SK-N-SH (cell line): ENCODE measurements at regions of chr3 and their contacts with region 1.

Region 1: GRCh38 chr3:186540221-186540834 is 3.9 kb downstream of the CRYGS start:
- DNase-seq: peak; percentile 49
- H3K4me3 ChIP-seq: peak overlapping the region in 1 of 2 experiments; percentile 31; a peak in 2 of 4 replicates
- H3K27ac ChIP-seq: peak overlapping the region in 1 of 2 experiments; percentile 85; a peak in 2 of 4 replicates
- H3K4me1 ChIP-seq: peaks cover 12 to 20% of the 10 kb centered on the region in 2 experiments
- H3K27me3 ChIP-seq: no peaks in the 10 kb centered on the region
- CTCF ChIP-seq: peak; percentile 88
- EP300 ChIP-seq: no peak
- RAD21 ChIP-seq: peak; percentile 94

Region 2: DNA sequence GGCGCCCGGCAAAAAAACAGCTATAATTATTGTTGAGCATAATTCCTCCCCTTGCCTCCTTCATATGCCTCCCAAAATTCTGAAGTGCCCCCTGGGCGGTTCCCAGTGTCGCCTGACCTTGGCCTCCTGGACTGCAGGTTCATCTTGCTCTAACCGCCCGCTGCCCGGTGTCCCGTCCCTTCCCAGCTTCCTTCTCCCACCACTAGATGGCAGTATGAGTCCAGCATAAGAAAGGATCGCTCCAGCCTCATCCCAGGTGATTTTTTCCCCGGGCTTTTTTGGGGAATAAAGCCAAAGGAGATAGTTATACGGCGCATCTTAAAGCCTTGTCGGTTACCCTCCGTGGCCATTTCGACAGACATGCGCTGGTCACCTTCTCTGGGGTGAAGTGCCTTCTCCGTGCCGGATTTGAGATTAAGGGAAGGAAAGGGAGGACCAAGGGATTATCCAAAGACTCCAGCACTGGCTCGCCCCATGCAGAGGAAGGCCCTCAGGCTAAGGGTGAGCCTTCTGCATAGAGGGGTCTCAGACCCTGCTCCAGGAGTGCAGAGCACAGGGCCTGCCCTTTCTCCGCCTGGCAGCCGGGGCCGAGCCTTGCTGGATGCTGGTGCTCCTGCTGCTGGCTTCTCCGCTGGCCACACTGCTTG is 556.7 kb before region 1 on chr3:
- CTCF ChIA-PET with region 1: interaction called, 70 read pairs
- POLR2A ChIA-PET with region 1: no interaction called
- DNase-seq: peak; percentile 83
- H3K4me3 ChIP-seq: peak overlapping the region in 1 of 2 experiments; percentile 21; a peak in 1 of 4 replicates
- H3K27ac ChIP-seq: no peak overlapping the region
- H3K4me1 ChIP-seq: peaks cover 0 to 3% of the 10 kb centered on the region in 2 experiments; a peak in 1 of 4 replicates
- H3K27me3 ChIP-seq: no peaks in the 10 kb centered on the region
- CTCF ChIP-seq: peak; percentile 90
- EP300 ChIP-seq: no peak
- RAD21 ChIP-seq: peak; percentile 98

Region 3: DNA sequence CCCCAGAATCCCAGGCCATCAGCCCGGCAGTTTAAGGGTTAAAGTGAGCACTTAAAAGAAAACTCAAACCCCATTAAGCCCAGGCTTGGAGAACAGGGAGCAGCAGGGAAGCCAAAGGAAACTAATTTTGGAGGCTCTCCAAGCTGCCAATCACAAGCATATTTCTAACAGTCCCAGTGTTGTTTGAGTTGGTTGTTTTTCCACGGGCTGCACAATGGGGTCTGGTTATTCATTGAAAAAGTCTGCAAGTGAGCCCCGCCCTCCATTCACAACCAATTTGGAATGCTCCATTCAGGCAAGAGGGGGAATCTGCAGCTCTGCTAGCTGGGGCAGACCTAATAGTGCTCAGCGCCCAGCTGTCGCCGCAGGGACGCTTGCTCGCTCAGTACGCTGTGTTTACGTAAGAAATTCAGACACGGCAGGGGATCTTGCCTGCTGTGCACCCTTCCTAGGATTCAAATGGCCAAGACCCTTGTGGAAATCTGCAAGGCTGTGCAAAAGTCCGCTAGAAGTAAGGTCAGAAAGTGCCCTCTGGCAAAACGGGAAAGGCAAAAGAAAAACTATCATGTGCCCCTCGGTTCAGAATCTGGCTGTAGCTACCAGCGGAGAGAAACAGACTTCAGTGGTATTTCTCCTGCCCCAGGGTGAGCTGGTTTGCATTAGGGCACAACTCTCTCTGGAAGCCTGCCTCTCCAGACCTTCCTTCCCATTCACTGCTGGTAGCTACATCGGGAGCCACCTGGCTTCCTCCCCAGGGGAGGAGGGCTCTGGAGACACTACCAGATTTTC is 442.5 kb before region 1 on chr3:
- CTCF ChIA-PET with region 1: interaction called, 12 read pairs
- POLR2A ChIA-PET with region 1: interaction called, 3 read pairs
- DNase-seq: peak; percentile 84
- H3K4me3 ChIP-seq: peak overlapping the region; percentile 42 to 59
- H3K27ac ChIP-seq: peak overlapping the region; percentile 57 to 98
- H3K4me1 ChIP-seq: peaks cover 35 to 40% of the 10 kb centered on the region in 2 experiments
- H3K27me3 ChIP-seq: no peaks in the 10 kb centered on the region
- CTCF ChIP-seq: no peak
- EP300 ChIP-seq: peak in 1 of 2 experiments; percentile 8; a peak in 1 of 4 replicates
- RAD21 ChIP-seq: no peak

Region 4: DNA sequence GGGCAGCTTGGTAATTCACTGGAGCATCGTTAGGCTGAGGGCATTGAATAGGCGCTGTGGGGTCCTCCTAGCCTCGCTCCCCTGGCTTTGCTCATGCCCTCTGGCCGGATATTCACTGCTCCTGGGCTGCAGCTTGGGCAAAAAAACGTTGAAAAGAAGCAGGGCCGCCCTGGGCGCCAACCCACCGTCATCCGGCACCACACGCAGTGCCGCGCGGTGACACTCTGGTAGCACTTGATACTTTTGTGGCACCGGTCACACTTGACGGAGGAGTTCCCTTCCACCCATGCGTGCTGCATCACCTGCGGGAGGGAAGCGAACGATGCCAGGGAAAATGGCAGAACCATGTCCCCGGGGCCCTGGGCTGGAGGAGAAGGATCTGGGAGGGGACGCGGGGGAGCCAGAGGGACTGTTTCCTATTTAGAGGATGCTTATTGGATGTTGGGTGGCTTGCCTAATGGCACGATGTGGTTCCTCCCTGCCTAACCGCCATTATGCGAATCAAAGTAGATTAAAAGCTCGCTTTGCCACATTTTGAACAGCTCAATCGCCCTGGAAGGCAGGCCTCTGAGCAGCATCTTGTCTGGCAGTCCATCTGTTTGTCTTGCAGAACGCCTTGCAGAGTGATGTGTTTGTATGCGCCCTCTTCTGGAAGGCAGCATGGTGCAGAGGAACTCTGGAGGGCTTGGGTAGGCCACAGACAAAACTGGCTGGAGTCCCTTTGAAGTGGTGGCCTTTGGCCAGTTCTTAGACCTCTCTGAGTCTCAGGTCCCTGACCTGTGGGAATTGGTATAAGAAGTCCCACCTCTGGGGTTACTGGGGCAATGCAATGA is 271.5 kb before region 1 on chr3:
- CTCF ChIA-PET with region 1: interaction called, 13 read pairs
- POLR2A ChIA-PET with region 1: no interaction called
- DNase-seq: no peak
- H3K4me3 ChIP-seq: no peak overlapping the region
- H3K27ac ChIP-seq: no peak overlapping the region
- H3K4me1 ChIP-seq: no peaks in the 10 kb centered on the region; a peak in 1 of 4 replicates
- H3K27me3 ChIP-seq: peaks cover 6% of the 10 kb centered on the region; the same call in 1 of the 2 replicates
- CTCF ChIP-seq: peak; percentile 33
- EP300 ChIP-seq: no peak
- RAD21 ChIP-seq: 0 out of 2 replicates have a peak, but pooled peaks have one; percentile 26

Region 5: GRCh38 chr3:186519021-186519658 is 21.2 kb before region 1 on chr3:
- CTCF ChIA-PET with region 1: interaction called, 13 read pairs
- POLR2A ChIA-PET with region 1: no interaction called
- DNase-seq: no peak
- H3K4me3 ChIP-seq: no peak overlapping the region
- H3K27ac ChIP-seq: no peak overlapping the region
- H3K4me1 ChIP-seq: no peaks in the 10 kb centered on the region
- H3K27me3 ChIP-seq: no peaks in the 10 kb centered on the region; the same call in 1 of the 2 replicates
- CTCF ChIP-seq: no peak
- EP300 ChIP-seq: no peak
- RAD21 ChIP-seq: no peak

Region 6: GRCh38 chr3:186592682-186593081 is 52.4 kb after region 1 on chr3:
- CTCF ChIA-PET with region 1: no interaction called
- POLR2A ChIA-PET with region 1: no interaction called
- DNase-seq: no peak
- H3K4me3 ChIP-seq: no peak overlapping the region
- H3K27ac ChIP-seq: no peak overlapping the region
- H3K4me1 ChIP-seq: no peaks in the 10 kb centered on the region
- H3K27me3 ChIP-seq: no peaks in the 10 kb centered on the region
- CTCF ChIP-seq: no peak
- EP300 ChIP-seq: no peak
- RAD21 ChIP-seq: no peak

Region 7: GRCh38 chr3:186635532-186635931 is 95.2 kb after region 1 on chr3:
- CTCF ChIA-PET with region 1: no interaction called
- POLR2A ChIA-PET with region 1: no interaction called
- DNase-seq: no peak
- H3K4me3 ChIP-seq: no peak overlapping the region
- H3K27ac ChIP-seq: no peak overlapping the region
- H3K4me1 ChIP-seq: no peaks in the 10 kb centered on the region
- H3K27me3 ChIP-seq: peaks cover 22% of the 10 kb centered on the region; the same call in 1 of the 2 replicates
- CTCF ChIP-seq: no peak
- EP300 ChIP-seq: no peak
- RAD21 ChIP-seq: no peak

Region 8: DNA sequence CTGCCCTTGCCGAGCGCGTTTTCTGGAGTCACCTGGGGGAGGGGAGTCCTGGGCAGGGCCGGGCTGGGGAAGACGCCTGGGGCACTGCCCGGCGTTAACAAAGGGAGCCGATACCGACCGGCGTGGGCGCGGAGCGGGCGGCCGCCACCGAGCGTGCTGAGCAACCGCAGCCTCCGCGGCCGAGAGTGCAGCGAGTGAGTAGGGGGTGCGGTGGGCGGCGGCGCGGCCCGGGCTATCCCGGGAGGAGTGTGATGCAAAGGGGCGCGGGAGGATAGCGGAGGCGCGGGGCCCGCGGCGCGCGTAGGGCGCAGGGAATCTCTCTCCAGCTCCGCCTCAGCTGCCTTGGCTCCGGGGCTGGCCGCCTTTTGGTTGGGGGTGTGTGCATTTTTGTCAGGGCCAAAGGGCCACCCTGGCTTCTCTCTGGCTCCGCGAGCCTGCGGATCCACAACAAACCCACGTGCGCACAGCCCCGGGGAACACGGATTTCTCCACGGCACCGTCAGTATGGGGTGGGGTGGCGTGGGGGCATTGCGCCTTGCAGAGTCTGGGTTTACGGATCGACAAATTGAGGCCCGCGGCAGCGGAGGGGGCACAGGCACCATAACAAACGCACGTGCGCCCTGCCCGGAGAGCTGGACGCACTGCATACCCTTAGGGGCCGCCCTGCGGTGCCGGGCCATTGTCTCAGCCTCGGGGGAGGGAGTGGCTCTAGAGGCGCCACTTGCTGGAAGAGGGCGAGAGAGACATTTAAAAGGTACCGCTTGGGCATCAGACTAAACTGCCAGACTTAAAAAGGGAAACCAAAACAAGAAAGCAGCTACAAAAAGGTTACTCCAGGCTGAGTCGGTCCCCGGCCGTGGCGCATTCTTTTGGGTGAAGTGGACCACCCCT is 390.6 kb after region 1 on chr3:
- CTCF ChIA-PET with region 1: no interaction called
- POLR2A ChIA-PET with region 1: no interaction called
- DNase-seq: peak; percentile 73
- H3K4me3 ChIP-seq: peak overlapping the region; percentile 82 to 90
- H3K27ac ChIP-seq: no peak overlapping the region
- H3K4me1 ChIP-seq: peaks cover 8 to 11% of the 10 kb centered on the region in 2 experiments; a peak in 2 of 4 replicates
- H3K27me3 ChIP-seq: no peaks in the 10 kb centered on the region
- CTCF ChIP-seq: 0 out of 2 replicates have a peak, but pooled peaks have one; percentile 18
- EP300 ChIP-seq: no peak
- RAD21 ChIP-seq: no peak